ENCODE measurements at regions of chr3 and their contacts with region 1.

Region 1: DNA sequence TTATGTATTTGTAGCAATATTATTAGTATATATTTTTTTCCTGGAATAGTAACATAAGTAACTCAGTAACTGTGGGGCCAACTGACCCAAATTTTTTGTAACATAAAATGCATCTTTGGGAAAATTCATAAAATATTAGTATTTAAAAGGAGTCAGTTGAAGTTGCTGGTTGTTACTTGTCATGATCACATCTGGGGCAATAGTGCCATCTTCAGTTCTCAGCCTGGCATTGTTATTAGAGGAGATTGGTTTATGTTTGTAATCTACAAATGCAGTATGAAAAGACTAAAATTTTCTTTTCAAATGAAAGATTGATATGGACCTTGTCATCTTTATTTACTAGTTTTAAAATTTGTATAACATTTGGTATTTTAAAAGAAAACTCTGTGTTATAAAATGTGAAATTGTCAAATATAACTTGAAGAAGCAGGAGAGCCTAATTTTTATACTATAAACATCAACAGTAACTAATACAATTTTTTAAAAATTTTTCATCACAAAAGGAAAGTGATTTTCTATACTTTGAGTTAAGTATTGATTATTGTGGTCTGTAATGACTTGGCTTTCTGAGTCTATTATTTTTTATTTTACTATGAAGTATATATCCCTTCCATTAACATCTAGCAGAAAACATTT is 38.8 kb upstream of the MLF1 start:
- DNase-seq: peak; percentile 24
- H3K4me3 ChIP-seq: no peak overlapping the region
- H3K27ac ChIP-seq: no peak overlapping the region
- H3K4me1 ChIP-seq: no peaks in the 10 kb centered on the region
- H3K27me3 ChIP-seq: no peaks in the 10 kb centered on the region
- CTCF ChIP-seq: peak; percentile 45 to 68

Region 2: GRCh38 chr3:157532529-157533297 is 999.5 kb before region 1 on chr3:
- CTCF ChIA-PET with region 1: no interaction called
- dilution Hi-C with region 1: no loop called
- in situ Hi-C with region 1: no loop called
- intact Hi-C with region 1: loop called (anchors 1 kb)
- DNase-seq: peak; percentile 68
- H3K4me3 ChIP-seq: no peak overlapping the region
- H3K27ac ChIP-seq: no peak overlapping the region
- H3K4me1 ChIP-seq: no peaks in the 10 kb centered on the region
- H3K27me3 ChIP-seq: no peaks in the 10 kb centered on the region
- CTCF ChIP-seq: peak; percentile 70 to 79

Region 3: GRCh38 chr3:157606011-157606851 is 926.0 kb before region 1 on chr3:
- CTCF ChIA-PET with region 1: no interaction called
- dilution Hi-C with region 1: no loop called
- in situ Hi-C with region 1: loop called in 1 of 2 experiments (anchors 25 kb)
- intact Hi-C with region 1: loop called (anchors 1 kb)
- DNase-seq: peak; percentile 47
- H3K4me3 ChIP-seq: no peak overlapping the region
- H3K27ac ChIP-seq: no peak overlapping the region
- H3K4me1 ChIP-seq: no peaks in the 10 kb centered on the region
- H3K27me3 ChIP-seq: no peaks in the 10 kb centered on the region
- CTCF ChIP-seq: peak; percentile 70 to 86

Region 4: DNA sequence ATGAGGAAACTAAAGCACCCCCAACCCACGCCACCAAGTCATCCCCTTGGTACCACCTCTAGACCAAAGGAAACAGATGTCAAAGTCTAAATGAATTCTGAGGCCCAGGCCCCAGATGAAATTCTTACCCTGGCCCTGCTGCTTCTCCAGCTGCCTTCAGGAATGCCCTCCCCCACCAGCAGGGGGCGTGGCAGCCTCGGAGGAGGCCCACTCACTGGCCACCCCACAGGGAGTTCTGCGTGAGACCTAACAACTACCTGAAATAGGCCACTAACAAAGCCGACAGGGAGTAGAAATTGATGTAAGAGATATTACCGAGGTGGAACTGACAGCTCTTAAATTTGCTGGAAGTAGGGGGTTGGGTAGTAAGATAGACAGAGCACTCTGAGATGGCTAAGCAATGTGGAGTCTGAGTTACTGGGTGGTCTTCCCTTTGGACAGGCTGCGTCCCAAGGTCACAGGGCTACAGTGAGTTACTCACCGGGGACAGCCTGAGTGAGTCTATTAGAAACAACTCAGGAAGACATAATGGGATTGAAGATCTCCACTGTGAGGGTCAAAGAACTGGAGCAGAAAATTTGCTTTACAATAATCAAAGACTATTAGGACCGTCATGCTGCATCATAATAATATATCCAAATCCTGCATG is 666.7 kb before region 1 on chr3:
- CTCF ChIA-PET with region 1: no interaction called
- dilution Hi-C with region 1: no loop called
- in situ Hi-C with region 1: no loop called
- intact Hi-C with region 1: loop called (anchors 2 kb)
- DNase-seq: peak; percentile 8
- H3K4me3 ChIP-seq: no peak overlapping the region
- H3K27ac ChIP-seq: no peak overlapping the region
- H3K4me1 ChIP-seq: no peaks in the 10 kb centered on the region
- H3K27me3 ChIP-seq: no peaks in the 10 kb centered on the region
- CTCF ChIP-seq: peak; percentile 72 to 76

Region 5: DNA sequence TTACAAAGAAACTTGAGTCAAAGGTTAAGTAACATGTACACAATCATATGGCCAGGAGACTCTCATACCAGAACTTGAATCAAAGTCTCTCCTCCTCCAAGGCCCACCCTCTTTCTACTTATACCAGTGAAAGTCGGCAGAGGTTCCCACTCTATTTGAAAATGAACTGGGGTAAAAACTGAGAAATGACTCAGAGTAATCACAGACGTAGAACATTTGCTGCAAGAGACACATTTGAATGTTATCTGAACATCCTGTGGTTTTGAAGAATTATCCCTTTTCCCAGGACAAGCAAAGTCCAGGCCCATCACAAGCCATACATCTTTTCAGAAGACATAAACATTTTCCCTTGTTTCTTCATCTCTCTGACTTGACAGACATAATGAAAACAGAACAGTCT is 481.8 kb before region 1 on chr3:
- CTCF ChIA-PET with region 1: no interaction called
- dilution Hi-C with region 1: no loop called
- in situ Hi-C with region 1: no loop called
- intact Hi-C with region 1: no loop called
- DNase-seq: no peak
- H3K4me3 ChIP-seq: no peak overlapping the region
- H3K27ac ChIP-seq: no peak overlapping the region
- H3K4me1 ChIP-seq: no peaks in the 10 kb centered on the region
- H3K27me3 ChIP-seq: no peaks in the 10 kb centered on the region
- CTCF ChIP-seq: no peak

Region 6: DNA sequence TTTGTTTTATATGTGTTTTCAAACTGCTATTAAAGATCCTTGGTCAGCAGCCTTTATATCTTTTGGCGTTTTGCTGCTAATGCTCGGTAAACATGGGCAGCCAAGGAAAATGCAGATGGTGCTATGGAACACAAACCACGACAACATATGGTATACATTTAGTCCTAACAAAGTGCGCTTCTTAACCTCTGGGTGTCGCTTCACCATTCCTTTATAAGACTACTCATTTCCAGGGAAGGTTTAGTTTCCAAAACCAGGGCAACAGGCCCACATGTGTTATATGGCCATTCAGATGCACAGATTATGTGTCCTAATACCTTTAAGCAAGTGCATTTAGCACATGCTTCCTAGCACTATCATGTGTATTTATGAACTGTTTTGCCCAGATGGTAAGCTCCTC is 440.7 kb before region 1 on chr3:
- CTCF ChIA-PET with region 1: no interaction called
- dilution Hi-C with region 1: no loop called
- in situ Hi-C with region 1: no loop called
- intact Hi-C with region 1: loop called (anchors 2 kb)
- DNase-seq: peak; percentile 35
- H3K4me3 ChIP-seq: no peak overlapping the region
- H3K27ac ChIP-seq: no peak overlapping the region
- H3K4me1 ChIP-seq: no peaks in the 10 kb centered on the region
- H3K27me3 ChIP-seq: peaks cover 27% of the 10 kb centered on the region
- CTCF ChIP-seq: peak; percentile 32 to 57

Region 7: DNA sequence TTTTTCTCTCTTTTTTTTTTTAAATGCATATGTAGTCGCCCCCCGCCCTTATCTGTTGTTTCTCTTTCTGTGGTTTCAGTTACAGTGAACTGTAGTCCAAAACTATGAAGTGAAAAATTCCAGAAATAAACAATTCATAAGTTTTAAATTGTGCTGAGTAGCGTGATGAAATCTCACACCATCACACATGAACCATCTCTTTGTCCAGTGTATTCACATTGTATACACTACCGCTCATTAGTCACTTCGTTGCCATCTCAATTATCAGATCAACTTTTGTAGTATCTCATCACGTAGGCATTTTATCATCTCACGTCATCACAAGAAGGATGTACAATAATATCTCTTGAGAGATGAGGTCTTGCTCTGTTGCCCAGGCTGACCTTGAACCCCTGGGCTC is 23.7 kb before region 1 on chr3:
- CTCF ChIA-PET with region 1: no interaction called
- dilution Hi-C with region 1: no loop called
- in situ Hi-C with region 1: no loop called
- intact Hi-C with region 1: no loop called
- DNase-seq: peak; percentile 4
- H3K4me3 ChIP-seq: no peak overlapping the region
- H3K27ac ChIP-seq: no peak overlapping the region
- H3K4me1 ChIP-seq: no peaks in the 10 kb centered on the region
- H3K27me3 ChIP-seq: no peaks in the 10 kb centered on the region
- CTCF ChIP-seq: no peak